CD4-positive, alpha-beta memory T cell (primary cell): ENCODE measurements at regions of chr2 and their contacts with region 1.

Region 1: GRCh38 chr2:111120253-111121027 is at the start of gene BCL2L11:
- DNase-seq: peak; percentile 85 to 91 (median 87)
- H3K4me3 ChIP-seq: peak within 1 kb of the TSS; percentile 78 to 83
- H3K4me3 Mint-ChIP-seq: peak within 1 kb of the TSS; percentile 88 to 97 (median 94)
- H3K27ac ChIP-seq: peak within 1 kb of the TSS; percentile 32
- H3K27ac Mint-ChIP-seq: peak within 1 kb of the TSS; percentile 82 to 95 (median 89)
- H3K4me1 ChIP-seq: peaks cover 47% of the 10 kb centered on the region
- H3K4me1 Mint-ChIP-seq: peaks cover 21 to 59% (median 37%) of the 10 kb centered on the region in 4 donors
- H3K27me3 ChIP-seq: peaks cover 36% of the 10 kb centered on the region
- H3K27me3 Mint-ChIP-seq: peaks cover 19 to 35% of the 10 kb centered on the region in 2 donors
- total RNA-seq, gene BCL2L11: 33.4 to 34.1 TPM

Region 2: DNA sequence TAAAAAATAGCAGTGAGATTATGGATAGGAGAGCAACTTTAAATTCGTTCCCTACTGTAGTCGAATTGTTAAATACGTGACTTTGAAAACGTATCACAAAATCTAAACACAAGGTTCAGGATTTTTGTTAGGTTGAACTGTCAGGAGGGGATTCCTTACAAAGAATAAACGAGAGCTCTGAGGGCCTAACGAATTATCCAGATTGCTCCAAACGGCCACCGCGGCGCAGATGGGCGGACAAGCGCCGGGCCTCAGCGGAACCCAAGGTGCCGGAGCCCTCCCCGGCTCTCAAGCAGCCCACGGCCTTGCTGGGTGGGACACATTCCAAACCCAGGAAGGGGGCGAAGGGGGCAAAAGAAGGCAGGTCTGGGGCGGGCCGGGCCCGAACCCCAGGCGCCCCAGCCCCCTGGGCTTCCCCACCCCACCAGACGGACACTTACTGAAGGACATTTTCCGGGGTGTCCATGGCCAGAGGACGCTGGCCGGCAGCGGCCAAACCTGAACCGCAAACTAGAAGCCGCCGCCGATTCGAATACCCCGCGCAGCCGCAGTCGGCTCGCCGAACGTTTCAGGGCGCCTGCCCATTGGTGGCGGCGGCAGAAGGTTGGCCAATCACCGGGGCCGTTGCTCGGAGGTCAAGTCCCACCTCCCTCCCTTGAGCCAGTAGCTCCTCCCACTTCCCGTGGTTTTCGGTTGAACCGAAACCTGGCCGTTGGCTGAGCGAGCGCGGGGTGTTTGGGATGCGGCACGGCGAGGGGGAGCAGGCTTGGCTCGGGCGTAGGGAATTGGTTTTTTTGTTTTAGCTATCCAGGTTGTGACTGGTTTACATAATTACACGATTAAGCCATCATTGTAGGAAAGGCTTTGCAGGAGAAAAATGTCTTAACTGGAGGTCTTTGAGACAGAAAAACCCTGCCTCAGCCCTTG is 442.6 kb before region 1 on chr2 and contains the start of gene BUB1:
- CTCF ChIA-PET with region 1: no interaction called
- POLR2A ChIA-PET with region 1: no interaction called
- intact Hi-C with region 1: loop called (anchors 10 kb)
- DNase-seq: peak; percentile 95
- H3K4me3 ChIP-seq: peak within 1 kb of the TSS; percentile 98
- H3K4me3 Mint-ChIP-seq: peak within 1 kb of the TSS; percentile 96 to 100 (median 98)
- H3K27ac ChIP-seq: peak within 1 kb of the TSS; percentile 72
- H3K27ac Mint-ChIP-seq: peak within 1 kb of the TSS; percentile 87 to 98 (median 95)
- H3K4me1 ChIP-seq: peaks cover 27% of the 10 kb centered on the region
- H3K4me1 Mint-ChIP-seq: peaks cover 15 to 40% (median 23%) of the 10 kb centered on the region in 4 donors
- H3K27me3 ChIP-seq: no peaks in the 10 kb centered on the region
- H3K27me3 Mint-ChIP-seq: no peaks in the 10 kb centered on the region
- total RNA-seq, gene BUB1: 1.7 to 2.9 TPM

Region 3: DNA sequence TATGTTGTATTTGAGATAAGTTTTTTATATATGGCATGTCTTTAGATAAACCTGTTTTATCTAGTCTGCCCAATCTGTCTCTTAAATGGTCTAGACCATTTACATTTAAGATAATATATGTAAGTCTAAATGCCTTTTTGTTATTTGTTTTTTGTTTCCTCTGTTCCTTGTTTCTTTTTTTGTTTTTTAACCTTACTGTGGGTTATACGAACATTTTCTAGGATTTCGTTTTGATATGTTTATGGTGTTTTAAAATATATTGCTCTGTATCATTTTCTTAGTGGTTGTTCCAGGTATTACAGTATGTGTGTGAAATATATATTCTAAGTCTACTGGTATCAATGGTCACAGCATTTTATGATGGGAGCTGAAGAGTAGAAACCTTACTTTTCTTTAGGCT is 13.6 kb after region 1 on chr2:
- CTCF ChIA-PET with region 1: interaction called, 3 read pairs
- POLR2A ChIA-PET with region 1: interaction called, 10 read pairs
- intact Hi-C with region 1: no loop called
- DNase-seq: no peak
- H3K4me3 ChIP-seq: no peak overlapping the region
- H3K4me3 Mint-ChIP-seq: no peak overlapping the region
- H3K27ac ChIP-seq: no peak overlapping the region
- H3K27ac Mint-ChIP-seq: no peak overlapping the region
- H3K4me1 ChIP-seq: no peaks in the 10 kb centered on the region
- H3K4me1 Mint-ChIP-seq: peaks cover 11 to 37% (median 16%) of the 10 kb centered on the region in 4 donors
- H3K27me3 ChIP-seq: no peaks in the 10 kb centered on the region
- H3K27me3 Mint-ChIP-seq: no peaks in the 10 kb centered on the region

Region 4: DNA sequence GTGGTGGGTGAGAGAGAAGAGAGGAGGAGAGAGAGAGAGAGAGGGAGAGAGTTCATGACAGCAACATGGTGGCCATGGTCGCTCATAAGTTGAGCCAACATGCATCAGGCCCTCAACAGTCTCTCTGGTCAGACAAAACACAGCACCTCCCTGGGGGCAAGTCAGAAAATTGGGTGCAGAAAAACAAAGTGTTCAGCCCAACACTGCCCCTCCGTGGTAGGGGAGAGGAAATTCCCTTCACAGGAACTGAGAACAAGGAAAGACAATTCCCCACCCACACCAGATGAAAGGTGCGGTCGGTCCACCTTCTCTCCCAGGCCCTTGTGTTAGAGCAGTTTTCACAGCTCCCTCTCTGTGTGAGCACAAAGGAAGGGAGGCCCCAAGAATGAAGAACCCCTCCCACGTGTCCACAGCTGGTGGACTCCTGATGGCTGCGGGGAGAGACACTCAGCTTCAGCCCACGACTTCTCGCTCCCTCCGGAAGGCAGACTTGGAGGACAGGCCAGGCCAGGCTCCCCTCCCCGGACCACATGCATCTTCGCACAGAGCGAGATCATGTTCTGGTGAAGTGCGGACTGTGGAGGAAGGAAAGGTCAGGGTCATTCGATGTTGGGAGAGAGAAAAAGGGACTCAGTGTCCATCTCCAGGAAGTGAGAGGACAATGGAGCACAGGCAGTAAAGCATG is 581.8 kb after region 1 on chr2:
- CTCF ChIA-PET with region 1: interaction called, 4 read pairs
- POLR2A ChIA-PET with region 1: no interaction called
- intact Hi-C with region 1: loop called (anchors 1 kb)
- DNase-seq: peak in 4 of 5 donors; percentile 33 to 45 (median 40)
- H3K4me3 ChIP-seq: no peak overlapping the region
- H3K4me3 Mint-ChIP-seq: peak overlapping the region in 2 of 8 donors; percentile 26 to 43
- H3K27ac ChIP-seq: no peak overlapping the region
- H3K27ac Mint-ChIP-seq: peak overlapping the region in 3 of 7 donors; percentile 4 to 70 (median 57)
- H3K4me1 ChIP-seq: peaks cover 29% of the 10 kb centered on the region
- H3K4me1 Mint-ChIP-seq: peaks cover 11 to 27% (median 22%) of the 10 kb centered on the region in 4 donors
- H3K27me3 ChIP-seq: no peaks in the 10 kb centered on the region
- H3K27me3 Mint-ChIP-seq: no peaks in the 10 kb centered on the region

Region 5: GRCh38 chr2:112764071-112765044 is 1643.9 kb after region 1 on chr2 and contains the start of gene CKAP2L:
- CTCF ChIA-PET with region 1: no interaction called
- POLR2A ChIA-PET with region 1: no interaction called
- intact Hi-C with region 1: loop called (anchors 5 kb)
- DNase-seq: peak; percentile 94 to 98 (median 96)
- H3K4me3 ChIP-seq: peak within 1 kb of the TSS; percentile 39 to 85
- H3K4me3 Mint-ChIP-seq: peak within 1 kb of the TSS; percentile 91 to 98 (median 95)
- H3K27ac ChIP-seq: peak within 1 kb of the TSS; percentile 60
- H3K27ac Mint-ChIP-seq: peak within 1 kb of the TSS; percentile 76 to 96 (median 92)
- H3K4me1 ChIP-seq: peaks cover 29% of the 10 kb centered on the region
- H3K4me1 Mint-ChIP-seq: peaks cover 21 to 49% (median 35%) of the 10 kb centered on the region in 4 donors
- H3K27me3 ChIP-seq: no peaks in the 10 kb centered on the region
- H3K27me3 Mint-ChIP-seq: no peaks in the 10 kb centered on the region
- total RNA-seq, gene CKAP2L: 0.06 TPM in 1 of 2 experiments, not detected in the other